Activated T-helper 1 cell treated with anti-CD3 and anti-CD28 coated beads, Interleukin-12 subunit alpha, Interleukin-12 subunit beta, Interleukin-2, Interleukin-4 antibody, amounts not matched to agents 30 ng/mL and 10 ng/mL and 1 ng/mL, durations not matched to agents 14 hours and 24 hours and 36 hours (primary cell): ENCODE measurements at regions of chr14 and their contacts with region 1.

Region 1: GRCh38 chr14:73491256-73492042 is 716 bp downstream of the RIOX1 start:
- DNase-seq: peak; percentile 75
- H3K4me3 Mint-ChIP-seq: peak overlapping the region; percentile 86
- H3K27ac Mint-ChIP-seq: peak overlapping the region; percentile 86
- H3K4me1 Mint-ChIP-seq: peaks cover 52% of the 10 kb centered on the region
- H3K27me3 Mint-ChIP-seq: peaks cover 5% of the 10 kb centered on the region

Region 2: DNA sequence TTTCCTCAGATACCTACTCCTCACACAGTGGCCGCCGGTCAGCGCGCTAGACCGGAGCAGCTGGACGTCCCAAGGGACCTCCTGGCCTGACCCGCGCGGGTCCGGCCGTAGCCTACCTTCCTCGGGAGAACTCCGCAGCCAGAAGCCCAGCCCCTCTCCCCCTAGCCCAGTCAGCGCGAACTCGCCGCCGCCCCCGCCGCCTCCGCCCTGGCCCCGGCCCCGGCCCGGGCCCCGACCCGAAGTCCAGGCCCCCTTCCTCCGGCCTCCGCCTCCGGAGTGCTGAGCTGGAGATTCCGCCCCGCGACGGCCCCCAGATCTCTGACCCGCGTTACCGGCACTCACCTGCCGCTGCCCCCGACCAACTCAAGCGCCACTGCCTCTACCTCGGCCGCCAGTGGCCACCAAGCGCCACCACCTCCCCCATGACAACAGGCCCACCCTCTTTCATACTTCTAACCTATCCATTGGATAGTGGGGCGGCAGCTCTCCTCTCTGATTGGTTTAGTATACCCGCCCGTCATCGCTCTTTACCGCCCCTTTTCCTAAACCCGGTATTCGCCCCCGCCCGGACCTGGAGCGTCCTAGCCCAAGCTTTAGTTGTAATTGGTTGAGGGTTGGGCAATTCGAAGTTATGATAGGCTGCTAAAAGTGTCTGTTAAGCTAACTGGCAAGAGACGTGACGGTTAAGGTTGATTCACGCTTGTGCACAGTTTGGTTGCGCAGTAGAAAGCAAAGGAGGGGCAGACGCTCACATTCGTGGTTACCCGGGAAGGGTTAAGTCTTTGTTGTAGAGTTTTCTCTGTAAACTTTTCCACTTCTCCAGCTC is 33.1 kb before region 1 on chr14 and contains the start of gene NUMB:
- intact Hi-C with region 1: loop called (anchors 1 kb)
- DNase-seq: peak; percentile 96
- H3K4me3 Mint-ChIP-seq: peak within 1 kb of the TSS; percentile 98
- H3K27ac Mint-ChIP-seq: peak within 1 kb of the TSS; percentile 98
- H3K4me1 Mint-ChIP-seq: peaks cover 58% of the 10 kb centered on the region
- H3K27me3 Mint-ChIP-seq: no peaks in the 10 kb centered on the region
- total RNA-seq, gene NUMB: 49.6 and 53.4 TPM in 2 replicates

Region 3: GRCh38 chr14:73644531-73645247 is 153.2 kb after region 1 on chr14 and contains the start of gene DNAL1:
- intact Hi-C with region 1: loop called (anchors 1 kb)
- DNase-seq: peak; percentile 92
- H3K4me3 Mint-ChIP-seq: peak within 1 kb of the TSS; percentile 86
- H3K27ac Mint-ChIP-seq: peak within 1 kb of the TSS; percentile 71
- H3K4me1 Mint-ChIP-seq: peaks cover 15% of the 10 kb centered on the region
- H3K27me3 Mint-ChIP-seq: no peaks in the 10 kb centered on the region
- total RNA-seq, gene DNAL1: 5.3 and 8.5 TPM in 2 replicates

Region 4: GRCh38 chr14:73851644-73852382 is 360.4 kb after region 1 on chr14 and contains the start of gene PTGR2:
- intact Hi-C with region 1: loop called (anchors 10 kb)
- DNase-seq: peak; percentile 82
- H3K4me3 Mint-ChIP-seq: peak within 1 kb of the TSS; percentile 91
- H3K27ac Mint-ChIP-seq: peak within 1 kb of the TSS; percentile 92
- H3K4me1 Mint-ChIP-seq: peaks cover 20% of the 10 kb centered on the region
- H3K27me3 Mint-ChIP-seq: peaks cover 3% of the 10 kb centered on the region
- total RNA-seq, gene PTGR2: 1.2 and 2.0 TPM in 2 replicates

Region 5: GRCh38 chr14:74179856-74180255 is 688.4 kb after region 1 on chr14:
- intact Hi-C with region 1: no loop called
- DNase-seq: no peak
- H3K4me3 Mint-ChIP-seq: no peak overlapping the region
- H3K27ac Mint-ChIP-seq: no peak overlapping the region
- H3K4me1 Mint-ChIP-seq: no peaks in the 10 kb centered on the region
- H3K27me3 Mint-ChIP-seq: no peaks in the 10 kb centered on the region